A673 (cell line): ENCODE measurements at regions of chr11 and their contacts with region 1.

Region 1: GRCh38 chr11:122020902-122021301 is 95.1 kb downstream of the BLID start:
- DNase-seq: peak; percentile 70
- H3K4me3 ChIP-seq: no peak overlapping the region
- H3K27ac ChIP-seq: no peak overlapping the region
- H3K4me1 ChIP-seq: peaks cover 7% of the 10 kb centered on the region
- H3K27me3 ChIP-seq: no peaks in the 10 kb centered on the region
- CTCF ChIP-seq: peak; percentile 82

Region 2: DNA sequence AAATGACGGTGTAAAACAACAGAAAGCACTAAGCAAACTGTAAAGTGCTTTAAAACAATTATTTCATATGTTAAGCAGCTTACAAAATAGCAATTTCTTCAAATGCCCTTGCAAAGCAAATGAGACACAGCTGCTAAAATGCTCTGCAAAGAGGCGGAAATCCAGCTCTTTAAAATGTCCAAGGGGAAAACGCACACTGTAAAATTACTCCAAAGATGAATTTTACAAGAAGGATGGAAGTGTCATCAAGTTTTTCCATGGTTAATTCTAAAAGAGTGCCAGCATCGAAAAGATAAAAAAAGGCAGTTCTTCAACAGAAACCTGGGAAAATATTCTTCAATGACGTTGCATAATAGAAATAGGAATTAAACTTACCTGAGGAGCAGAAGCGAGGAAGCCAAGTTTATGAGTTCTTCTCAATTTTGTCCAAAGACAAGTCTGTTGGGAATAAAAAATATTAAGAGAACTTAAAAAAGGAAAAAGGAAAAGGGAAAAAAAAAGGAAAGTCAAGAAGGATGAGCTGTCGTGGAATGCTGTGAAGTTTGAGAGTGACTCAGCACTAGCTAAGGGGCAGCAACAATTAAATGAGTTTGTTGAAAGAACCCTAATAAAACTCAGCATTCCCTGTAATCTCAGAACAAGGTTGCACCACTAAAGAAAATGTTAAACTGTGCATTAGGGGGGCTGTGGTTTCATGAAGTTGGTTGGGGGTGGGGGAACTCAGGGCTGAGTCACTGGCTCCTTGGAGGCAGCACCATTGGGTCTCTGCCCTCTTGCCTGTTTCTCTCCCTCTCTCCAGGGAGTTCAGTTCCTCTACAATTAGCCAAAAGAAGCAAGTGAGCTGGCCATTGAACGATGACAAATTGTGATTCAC is 159.3 kb after region 1 on chr11:
- CTCF ChIA-PET with region 1: interaction called, 15 read pairs
- POLR2A ChIA-PET with region 1: no interaction called
- intact Hi-C with region 1: no loop called
- DNase-seq: peak; percentile 82
- H3K4me3 ChIP-seq: peak overlapping the region; percentile 5
- H3K27ac ChIP-seq: peak overlapping the region; percentile 53
- H3K4me1 ChIP-seq: peaks cover 32% of the 10 kb centered on the region
- H3K27me3 ChIP-seq: no peaks in the 10 kb centered on the region
- CTCF ChIP-seq: no peak

Region 3: GRCh38 chr11:122317305-122317704 is 296.4 kb after region 1 on chr11:
- CTCF ChIA-PET with region 1: no interaction called
- POLR2A ChIA-PET with region 1: no interaction called
- intact Hi-C with region 1: no loop called
- DNase-seq: peak; percentile 16
- H3K4me3 ChIP-seq: no peak overlapping the region
- H3K27ac ChIP-seq: no peak overlapping the region
- H3K4me1 ChIP-seq: no peaks in the 10 kb centered on the region
- H3K27me3 ChIP-seq: no peaks in the 10 kb centered on the region
- CTCF ChIP-seq: no peak

Region 4: GRCh38 chr11:123052901-123053721 is 1032.2 kb after region 1 on chr11:
- CTCF ChIA-PET with region 1: no interaction called
- POLR2A ChIA-PET with region 1: no interaction called
- intact Hi-C with region 1: no loop called
- DNase-seq: no peak
- H3K4me3 ChIP-seq: no peak overlapping the region
- H3K27ac ChIP-seq: no peak overlapping the region
- H3K4me1 ChIP-seq: peaks cover 14% of the 10 kb centered on the region
- H3K27me3 ChIP-seq: no peaks in the 10 kb centered on the region
- CTCF ChIP-seq: no peak